MCF 10A (cell line): ENCODE measurements at regions of chr4 and their contacts with region 1.

Region 1: GRCh38 chr4:158630893-158631292 is 40.8 kb downstream of the C4orf46 start:
- DNase-seq: peak; percentile 32
- H3K4me3 Mint-ChIP-seq: no peak overlapping the region
- H3K27ac Mint-ChIP-seq: no peak overlapping the region
- H3K4me1 Mint-ChIP-seq: no peaks in the 10 kb centered on the region
- H3K27me3 Mint-ChIP-seq: no peaks in the 10 kb centered on the region
- CTCF ChIP-seq: no peak

Region 2: DNA sequence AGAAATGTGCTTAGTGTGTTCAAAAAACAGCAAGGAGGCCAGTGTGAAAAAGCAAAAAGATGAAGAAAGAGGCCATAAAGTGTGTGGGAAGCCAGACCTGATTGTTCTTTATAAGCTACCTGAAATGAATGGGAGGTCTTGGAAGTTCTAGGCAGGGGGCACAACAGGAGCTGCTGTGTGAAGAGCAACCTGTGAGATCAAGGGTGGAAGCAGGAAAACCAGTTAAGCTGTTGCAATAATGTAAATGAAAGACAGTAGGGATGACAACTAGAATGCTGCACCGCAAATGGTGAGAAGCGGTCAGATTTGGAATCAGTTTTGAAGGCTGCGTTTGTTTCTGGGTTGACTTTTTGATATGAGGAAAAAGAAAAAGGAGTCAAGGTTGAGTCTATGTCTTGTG is 297.1 kb before region 1 on chr4:
- CTCF ChIA-PET with region 1: no interaction called
- POLR2A ChIA-PET with region 1: no interaction called
- intact Hi-C with region 1: no loop called
- DNase-seq: no peak
- H3K4me3 Mint-ChIP-seq: no peak overlapping the region
- H3K27ac Mint-ChIP-seq: peak overlapping the region; percentile 18
- H3K4me1 Mint-ChIP-seq: peaks cover 13% of the 10 kb centered on the region
- H3K27me3 Mint-ChIP-seq: no peaks in the 10 kb centered on the region
- CTCF ChIP-seq: no peak

Region 3: DNA sequence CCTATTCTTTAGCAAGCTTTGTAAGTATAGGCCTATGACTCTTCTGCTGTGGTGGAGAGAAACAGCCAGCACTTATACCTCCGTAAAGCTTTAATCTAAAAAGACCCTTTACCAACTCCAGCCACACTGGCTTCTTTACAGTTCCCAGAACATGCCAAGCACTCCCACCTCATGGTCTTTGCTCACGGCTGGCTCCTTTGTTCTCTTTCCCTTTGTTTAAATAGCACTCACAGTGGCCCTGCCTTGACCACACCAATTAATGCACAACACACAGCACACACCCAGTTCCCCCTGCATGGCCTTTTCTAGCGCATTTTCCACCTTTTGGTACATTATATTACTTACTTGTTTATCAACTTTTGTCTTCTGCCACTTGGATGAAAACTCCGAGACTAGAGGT is 73.4 kb after region 1 on chr4:
- CTCF ChIA-PET with region 1: no interaction called
- POLR2A ChIA-PET with region 1: no interaction called
- intact Hi-C with region 1: loop called (anchors 2 kb)
- DNase-seq: no peak
- H3K4me3 Mint-ChIP-seq: no peak overlapping the region
- H3K27ac Mint-ChIP-seq: no peak overlapping the region
- H3K4me1 Mint-ChIP-seq: no peaks in the 10 kb centered on the region
- H3K27me3 Mint-ChIP-seq: no peaks in the 10 kb centered on the region
- CTCF ChIP-seq: no peak